ENCODE measurements at regions of chr17 and their contacts with region 1.

Region 1: GRCh38 chr17:82942166-82943130 is 102.6 kb upstream of the ZNF750 start:
- DNase-seq: peak in 1 of 2 donors; percentile 55
- ATAC-seq: no peak
- H3K4me3 ChIP-seq: no peak overlapping the region
- H3K27ac ChIP-seq: no peak overlapping the region
- H3K4me1 ChIP-seq: no peaks in the 10 kb centered on the region
- H3K27me3 ChIP-seq: no peaks in the 10 kb centered on the region

Region 2: DNA sequence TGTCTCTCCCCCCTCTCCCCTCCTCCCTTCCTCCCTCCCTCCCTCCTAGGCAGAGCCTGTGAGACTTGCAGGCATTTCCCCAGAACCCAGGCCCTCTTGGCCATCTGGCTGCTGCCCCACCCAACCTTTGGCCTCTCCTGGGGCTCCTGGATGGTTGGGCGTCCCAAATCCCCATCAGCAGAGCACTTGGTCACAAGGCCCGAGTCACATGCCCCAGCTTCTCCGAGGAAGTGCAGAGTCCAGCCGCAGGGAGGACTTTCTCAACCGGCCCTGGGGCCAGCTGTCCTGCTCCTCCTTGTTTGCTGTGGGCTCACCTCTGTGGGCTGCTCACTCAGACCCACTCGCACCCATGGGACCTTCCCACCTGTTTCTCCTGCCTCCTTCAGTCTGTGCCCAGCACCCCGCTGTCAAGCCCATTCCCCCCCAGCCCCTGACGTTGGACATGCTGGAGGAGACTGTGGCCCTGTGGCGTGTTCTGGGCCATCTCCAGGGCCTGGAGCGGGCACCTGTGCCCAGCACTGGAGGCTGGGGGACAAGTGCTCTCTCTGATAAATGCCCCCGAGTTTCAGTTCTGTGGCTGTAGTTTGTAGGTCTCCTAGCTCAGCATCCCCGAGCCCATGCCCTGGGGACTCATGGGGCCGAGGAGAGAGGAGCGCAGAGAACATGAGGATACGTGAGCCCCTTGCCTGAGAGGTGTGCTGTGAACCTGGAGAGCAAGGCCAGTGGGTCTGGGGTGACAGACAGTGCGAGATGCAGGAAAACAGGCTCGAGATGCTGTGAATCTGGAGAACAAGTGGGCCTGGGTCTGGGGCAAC is 60.3 kb before region 1 on chr17:
- intact Hi-C with region 1: loop called in 1 of 2 experiments (anchors 10 kb)
- DNase-seq: peak in 1 of 2 donors; percentile 91
- ATAC-seq: peak; percentile 34
- H3K4me3 ChIP-seq: no peak overlapping the region
- H3K27ac ChIP-seq: no peak overlapping the region
- H3K4me1 ChIP-seq: no peaks in the 10 kb centered on the region
- H3K27me3 ChIP-seq: no peaks in the 10 kb centered on the region

Measured in aorta (tissue), 5 donors.